ENCODE measurements at regions of chr16 and their contacts with region 1.

Region 1: GRCh38 chr16:66580605-66581209 is 1.4 kb downstream of the CMTM2 start:
- DNase-seq: no peak
- H3K4me3 Mint-ChIP-seq: no peak overlapping the region
- H3K27ac Mint-ChIP-seq: no peak overlapping the region
- H3K4me1 Mint-ChIP-seq: peaks cover 16% of the 10 kb centered on the region
- H3K27me3 Mint-ChIP-seq: peaks cover 50% of the 10 kb centered on the region

Region 2: DNA sequence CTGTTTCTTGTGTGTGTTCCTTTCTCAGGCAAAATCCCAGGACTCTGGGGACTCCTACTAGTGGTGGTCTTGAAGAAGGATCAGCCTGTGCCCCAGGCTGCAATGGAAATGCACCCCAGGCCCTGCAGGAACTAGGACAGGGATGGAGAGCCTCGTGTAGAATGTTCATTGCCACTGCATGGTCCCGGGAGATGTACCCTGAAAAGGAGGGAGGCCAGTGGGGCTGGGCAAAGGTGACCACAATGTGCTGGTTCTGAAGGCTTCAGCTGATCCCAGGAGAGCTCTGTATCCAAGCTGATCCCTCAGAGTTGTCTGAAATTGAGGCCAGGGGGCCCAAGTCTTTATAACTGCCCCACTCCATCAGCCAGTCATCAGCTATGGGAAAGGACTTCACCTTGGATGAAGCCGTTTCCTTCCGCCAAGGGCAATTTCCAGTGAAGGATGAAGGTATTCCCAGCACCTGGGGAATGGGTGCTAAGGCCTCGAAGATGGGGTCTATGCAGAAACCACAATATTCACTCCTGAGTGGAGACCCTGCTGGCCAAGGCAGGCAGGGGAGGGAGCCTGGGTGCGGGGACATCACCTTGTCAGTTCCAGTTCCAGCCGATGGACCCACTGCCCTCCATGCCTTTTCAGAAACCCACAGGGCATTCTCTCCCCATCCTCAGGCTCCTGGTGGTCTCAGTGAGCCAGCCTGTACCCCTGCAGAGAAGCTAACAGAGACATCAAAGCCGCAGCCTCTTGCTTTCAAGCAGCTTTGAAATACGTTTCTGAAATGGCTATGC is 274.1 kb before region 1 on chr16:
- CTCF ChIA-PET with region 1: no interaction called
- DNase-seq: no peak
- H3K4me3 Mint-ChIP-seq: no peak overlapping the region
- H3K27ac Mint-ChIP-seq: no peak overlapping the region
- H3K4me1 Mint-ChIP-seq: no peaks in the 10 kb centered on the region
- H3K27me3 Mint-ChIP-seq: peaks cover 14% of the 10 kb centered on the region

Region 3: GRCh38 chr16:66502020-66502913 is 78.4 kb before region 1 on chr16:
- CTCF ChIA-PET with region 1: no interaction called
- DNase-seq: no peak
- H3K4me3 Mint-ChIP-seq: no peak overlapping the region
- H3K27ac Mint-ChIP-seq: no peak overlapping the region
- H3K4me1 Mint-ChIP-seq: peaks cover 3% of the 10 kb centered on the region
- H3K27me3 Mint-ChIP-seq: peaks cover 22% of the 10 kb centered on the region

Region 4: GRCh38 chr16:66549284-66550131 is 31.2 kb before region 1 on chr16 and contains the start of gene TK2:
- CTCF ChIA-PET with region 1: no interaction called
- DNase-seq: peak; percentile 69
- H3K4me3 Mint-ChIP-seq: peak within 1 kb of the TSS; percentile 78
- H3K27ac Mint-ChIP-seq: peak within 1 kb of the TSS; percentile 75
- H3K4me1 Mint-ChIP-seq: peaks cover 59% of the 10 kb centered on the region
- H3K27me3 Mint-ChIP-seq: peaks cover 4% of the 10 kb centered on the region

Region 5: DNA sequence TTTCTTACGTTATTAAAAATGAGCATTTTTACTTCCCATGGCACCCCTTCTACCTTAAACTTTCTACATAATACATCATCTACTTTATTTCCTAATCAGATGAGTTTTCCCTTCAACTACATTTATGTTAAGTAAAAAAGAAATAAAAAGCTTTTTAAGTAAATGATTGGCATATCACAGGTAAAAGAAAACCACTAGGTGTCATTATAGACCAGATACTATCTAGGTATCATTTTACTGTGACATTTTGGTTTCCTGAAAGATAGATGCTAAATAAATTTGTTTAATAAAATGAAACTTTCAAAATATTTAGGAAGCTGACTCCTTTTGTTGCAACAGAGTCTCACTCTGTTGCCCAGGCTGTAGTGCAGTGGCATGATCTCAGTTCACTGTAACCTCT is 18.3 kb before region 1 on chr16:
- CTCF ChIA-PET with region 1: interaction called, 13 read pairs
- DNase-seq: no peak
- H3K4me3 Mint-ChIP-seq: no peak overlapping the region
- H3K27ac Mint-ChIP-seq: no peak overlapping the region
- H3K4me1 Mint-ChIP-seq: peaks cover 60% of the 10 kb centered on the region
- H3K27me3 Mint-ChIP-seq: no peaks in the 10 kb centered on the region

Measured in activated naive CD4-positive, alpha-beta T cell treated with anti-CD3 and anti-CD28 coated beads, Interleukin-2, amount 10 ng/mL, durations not matched to agents 7 days and 5 days (primary cell).